Heart left ventricle (tissue), 16 donors: ENCODE measurements at regions of chr15 and their contacts with region 1.

Region 1: DNA sequence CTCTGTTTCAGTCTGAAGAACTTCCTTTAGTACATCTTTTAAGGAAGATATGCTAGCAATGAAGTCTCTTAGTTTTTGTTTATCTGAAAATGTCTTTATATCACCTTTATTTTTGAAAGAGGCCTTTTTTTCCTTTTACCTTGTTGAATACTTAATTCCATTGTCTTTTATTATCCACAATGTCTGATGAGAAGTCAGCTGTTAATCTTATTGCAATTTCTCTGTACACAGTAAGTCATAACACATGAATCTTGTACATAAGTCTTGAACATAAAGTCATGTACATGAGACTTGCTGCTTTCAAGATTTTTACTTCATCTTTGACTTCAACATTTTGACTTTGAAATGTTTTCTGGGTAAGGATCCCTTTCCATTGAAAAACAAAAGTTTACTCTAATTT is 424.3 kb upstream of the ATP10A start:
- DNase-seq: no peak
- ATAC-seq: no peak
- H3K4me3 ChIP-seq: no peak overlapping the region
- H3K27ac ChIP-seq: no peak overlapping the region
- H3K4me1 ChIP-seq: no peaks in the 10 kb centered on the region
- H3K27me3 ChIP-seq: no peaks in the 10 kb centered on the region
- CTCF ChIP-seq: no peak
- POLR2A ChIP-seq: no peak

Region 2: GRCh38 chr15:26234976-26235767 is 52.2 kb before region 1 on chr15:
- intact Hi-C with region 1: loop called in 1 of 10 experiments (anchors 10 kb)
- DNase-seq: no peak
- ATAC-seq: no peak
- H3K4me3 ChIP-seq: no peak overlapping the region
- H3K27ac ChIP-seq: no peak overlapping the region
- H3K4me1 ChIP-seq: no peaks in the 10 kb centered on the region
- H3K27me3 ChIP-seq: no peaks in the 10 kb centered on the region
- CTCF ChIP-seq: no peak
- POLR2A ChIP-seq: no peak